WTC11 (cell line): ENCODE measurements at regions of chr2 and their contacts with region 1.

Region 1: DNA sequence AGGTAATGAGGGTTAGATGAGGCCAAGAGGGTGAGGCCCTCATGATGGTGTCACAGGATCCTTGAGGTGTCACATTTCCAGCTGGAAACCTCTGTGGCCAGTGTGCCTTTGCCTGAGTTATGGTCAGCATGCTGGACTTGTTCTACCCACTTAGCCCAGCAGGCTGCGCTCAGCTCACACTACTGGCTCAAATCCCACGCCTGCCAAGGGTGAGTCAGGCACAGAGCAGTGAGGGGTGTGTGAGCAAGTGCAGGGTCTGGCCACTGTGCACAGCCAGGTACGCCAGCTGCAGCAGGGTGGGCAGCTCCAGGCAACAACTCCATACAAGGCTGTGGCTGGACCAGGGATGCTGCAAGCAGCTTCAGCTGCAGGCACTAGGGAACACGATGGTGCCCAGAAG is 616.6 kb upstream of the FSHR start:
- DNase-seq: peak; percentile 84
- ATAC-seq: peak; percentile 100
- H3K4me3 Mint-ChIP-seq: no peak overlapping the region
- H3K27ac Mint-ChIP-seq: no peak overlapping the region
- H3K4me1 Mint-ChIP-seq: peaks cover 4% of the 10 kb centered on the region; the same call in 1 of the 2 replicates
- H3K27me3 Mint-ChIP-seq: no peaks in the 10 kb centered on the region
- CTCF ChIP-seq: peak; percentile 59

Region 2: DNA sequence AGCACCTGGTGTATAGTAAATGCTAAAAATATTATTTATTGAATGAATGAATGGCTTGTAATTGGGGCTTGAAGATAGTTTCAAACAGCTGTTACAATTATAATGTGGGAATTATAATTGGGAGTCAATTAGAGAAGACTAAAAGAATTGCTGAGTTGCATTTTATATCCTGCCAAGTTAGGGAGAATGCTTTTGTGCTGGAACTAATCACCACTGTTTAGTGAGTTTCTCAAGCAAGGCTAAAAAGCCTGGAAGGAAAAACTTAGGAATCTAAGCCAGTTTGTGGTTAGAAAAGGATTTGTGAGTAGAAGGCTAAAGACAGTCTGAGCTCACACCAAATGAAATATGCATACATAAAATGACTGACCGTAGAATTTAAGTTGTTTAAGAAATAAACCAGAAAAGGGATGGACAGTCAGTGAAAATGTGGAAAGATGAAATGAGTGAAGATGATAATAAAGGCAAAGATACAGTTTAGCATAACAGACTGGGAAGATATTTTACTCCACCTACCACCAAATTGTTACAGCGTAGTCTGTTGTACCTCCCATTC is 31.1 kb after region 1 on chr2:
- CTCF ChIA-PET with region 1: no interaction called
- POLR2A ChIA-PET with region 1: no interaction called
- DNase-seq: no peak
- ATAC-seq: no peak
- H3K4me3 Mint-ChIP-seq: no peak overlapping the region
- H3K27ac Mint-ChIP-seq: no peak overlapping the region
- H3K4me1 Mint-ChIP-seq: peaks cover 4% of the 10 kb centered on the region; the same call in 1 of the 2 replicates
- H3K27me3 Mint-ChIP-seq: peaks cover 3% of the 10 kb centered on the region; the same call in 1 of the 2 replicates
- CTCF ChIP-seq: no peak

Region 3: DNA sequence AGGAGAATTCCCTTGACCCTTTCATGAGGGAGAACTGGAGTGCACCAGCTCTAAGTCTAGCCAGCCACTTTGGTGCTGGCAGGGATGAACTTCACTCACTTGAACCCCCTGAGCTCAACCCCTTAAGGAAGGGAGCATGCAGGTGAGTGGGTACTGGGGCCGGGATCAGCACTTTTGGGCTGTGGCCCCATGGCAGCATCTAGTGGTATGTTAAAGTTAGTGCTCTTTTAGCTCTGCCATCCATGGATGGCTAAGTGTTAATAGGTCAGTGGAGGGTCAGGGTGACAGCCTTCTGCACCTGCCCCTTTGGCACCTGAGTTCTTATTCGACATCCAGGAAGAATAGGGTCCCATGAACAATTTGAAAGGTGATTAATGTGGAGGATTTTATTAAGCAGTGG is 72.4 kb after region 1 on chr2:
- CTCF ChIA-PET with region 1: interaction called, 10 read pairs
- POLR2A ChIA-PET with region 1: no interaction called
- DNase-seq: no peak
- ATAC-seq: peak; percentile 81
- H3K4me3 Mint-ChIP-seq: no peak overlapping the region
- H3K27ac Mint-ChIP-seq: no peak overlapping the region
- H3K4me1 Mint-ChIP-seq: peaks cover 16% of the 10 kb centered on the region
- H3K27me3 Mint-ChIP-seq: no peaks in the 10 kb centered on the region
- CTCF ChIP-seq: no peak

Region 4: DNA sequence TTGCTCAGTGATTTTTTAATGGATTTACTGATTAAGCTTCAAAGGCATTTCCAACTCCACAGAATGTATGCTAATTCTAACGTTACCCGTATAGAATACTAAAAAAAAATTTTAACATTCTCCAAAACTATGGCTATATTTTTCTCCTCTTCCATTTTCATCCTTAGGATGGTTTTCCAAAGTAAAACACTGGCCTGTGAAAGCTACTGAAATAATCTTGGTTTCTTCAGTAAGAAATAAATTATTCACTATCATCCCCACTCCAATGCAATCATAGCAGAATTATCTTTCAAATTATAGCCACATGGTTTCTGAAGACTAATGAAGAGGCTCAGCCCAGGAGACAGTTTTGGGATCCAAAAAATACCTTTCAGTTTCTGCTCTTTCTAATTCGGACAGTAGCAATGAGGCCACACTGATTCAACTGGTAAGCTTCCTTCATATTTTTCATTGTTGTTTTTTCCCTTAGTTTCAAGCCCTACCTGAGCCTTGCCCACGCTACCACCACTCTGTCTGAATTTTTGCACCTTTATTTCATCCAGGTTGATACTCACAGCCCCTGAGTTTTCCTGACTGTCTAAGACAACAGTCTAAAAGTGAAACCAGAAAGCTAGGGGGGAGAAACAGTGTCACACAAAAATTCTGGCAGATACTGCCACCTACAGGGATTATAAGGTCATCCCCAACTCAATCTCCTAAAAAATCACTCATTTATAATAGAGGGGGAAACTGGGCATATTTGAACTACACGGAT is 373.1 kb after region 1 on chr2:
- CTCF ChIA-PET with region 1: interaction called, 43 read pairs
- POLR2A ChIA-PET with region 1: no interaction called
- DNase-seq: no peak
- ATAC-seq: peak; percentile 77
- H3K4me3 Mint-ChIP-seq: no peak overlapping the region
- H3K27ac Mint-ChIP-seq: peak overlapping the region; percentile 88; the same call in 1 of the 2 replicates
- H3K4me1 Mint-ChIP-seq: peaks cover 12% of the 10 kb centered on the region
- H3K27me3 Mint-ChIP-seq: no peaks in the 10 kb centered on the region
- CTCF ChIP-seq: peak; percentile 43; the same call in 1 of the 2 replicates